Activated naive CD8-positive, alpha-beta T cell treated with anti-CD3 and anti-CD28 coated beads, Interleukin-2, amount 10 ng/mL, durations not matched to agents 7 days and 5 days (primary cell): ENCODE measurements at regions of chr1 and their contacts with region 1.

Region 1: DNA sequence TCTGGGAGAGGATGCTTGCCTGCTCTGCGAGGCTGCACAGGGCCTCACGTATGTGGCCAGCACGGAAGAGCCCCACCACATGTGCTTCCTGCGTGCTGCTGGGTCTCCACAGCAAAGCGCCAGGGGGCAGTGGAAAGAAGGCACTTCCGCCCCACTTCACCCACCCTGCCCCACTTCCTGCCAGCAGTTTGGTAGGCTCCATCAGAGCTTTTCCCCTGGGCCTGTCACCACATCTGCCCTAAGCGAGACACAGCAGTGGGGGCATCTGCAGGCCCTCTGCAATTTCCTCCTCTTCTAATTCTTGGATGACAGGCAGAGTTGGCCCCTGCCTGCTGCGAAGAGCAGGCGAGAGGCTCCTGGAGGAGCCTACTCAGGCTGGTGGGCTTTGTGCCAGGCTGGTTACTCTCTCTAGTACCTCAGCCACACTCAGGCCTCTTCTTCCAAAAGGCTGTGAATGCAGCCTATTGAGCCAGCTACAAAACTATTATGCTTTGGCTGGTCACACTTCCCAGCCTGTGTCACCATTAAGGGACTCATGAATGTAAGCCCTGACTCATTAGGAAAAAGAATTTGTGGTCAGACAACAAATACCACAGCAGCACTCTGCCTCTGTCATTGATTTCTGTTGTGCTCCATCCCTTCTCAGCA is 25.0 kb downstream of the CD244 start:
- DNase-seq: peak; percentile 84
- ATAC-seq: peak; percentile 92
- H3K4me3 Mint-ChIP-seq: peak overlapping the region; percentile 76
- H3K27ac Mint-ChIP-seq: peak overlapping the region; percentile 98
- H3K4me1 Mint-ChIP-seq: peaks cover 63% of the 10 kb centered on the region
- H3K27me3 Mint-ChIP-seq: no peaks in the 10 kb centered on the region

Region 2: GRCh38 chr1:160795951-160796383 is 41.7 kb before region 1 on chr1 and contains the start of gene LY9:
- POLR2A ChIA-PET with region 1: interaction called, 14 read pairs
- DNase-seq: peak; percentile 65
- ATAC-seq: peak; percentile 81
- H3K4me3 Mint-ChIP-seq: peak within 1 kb of the TSS; percentile 92
- H3K27ac Mint-ChIP-seq: peak within 1 kb of the TSS; percentile 97
- H3K4me1 Mint-ChIP-seq: peaks cover 59% of the 10 kb centered on the region
- H3K27me3 Mint-ChIP-seq: no peaks in the 10 kb centered on the region
- total RNA-seq, gene LY9: 70.9 to 73.6 TPM

Region 3: GRCh38 chr1:160855181-160855981 is 17.7 kb after region 1 on chr1:
- POLR2A ChIA-PET with region 1: interaction called, 19 read pairs
- DNase-seq: peak; percentile 53
- ATAC-seq: peak; percentile 89
- H3K4me3 Mint-ChIP-seq: no peak overlapping the region
- H3K27ac Mint-ChIP-seq: no peak overlapping the region
- H3K4me1 Mint-ChIP-seq: peaks cover 13% of the 10 kb centered on the region
- H3K27me3 Mint-ChIP-seq: no peaks in the 10 kb centered on the region

Region 4: DNA sequence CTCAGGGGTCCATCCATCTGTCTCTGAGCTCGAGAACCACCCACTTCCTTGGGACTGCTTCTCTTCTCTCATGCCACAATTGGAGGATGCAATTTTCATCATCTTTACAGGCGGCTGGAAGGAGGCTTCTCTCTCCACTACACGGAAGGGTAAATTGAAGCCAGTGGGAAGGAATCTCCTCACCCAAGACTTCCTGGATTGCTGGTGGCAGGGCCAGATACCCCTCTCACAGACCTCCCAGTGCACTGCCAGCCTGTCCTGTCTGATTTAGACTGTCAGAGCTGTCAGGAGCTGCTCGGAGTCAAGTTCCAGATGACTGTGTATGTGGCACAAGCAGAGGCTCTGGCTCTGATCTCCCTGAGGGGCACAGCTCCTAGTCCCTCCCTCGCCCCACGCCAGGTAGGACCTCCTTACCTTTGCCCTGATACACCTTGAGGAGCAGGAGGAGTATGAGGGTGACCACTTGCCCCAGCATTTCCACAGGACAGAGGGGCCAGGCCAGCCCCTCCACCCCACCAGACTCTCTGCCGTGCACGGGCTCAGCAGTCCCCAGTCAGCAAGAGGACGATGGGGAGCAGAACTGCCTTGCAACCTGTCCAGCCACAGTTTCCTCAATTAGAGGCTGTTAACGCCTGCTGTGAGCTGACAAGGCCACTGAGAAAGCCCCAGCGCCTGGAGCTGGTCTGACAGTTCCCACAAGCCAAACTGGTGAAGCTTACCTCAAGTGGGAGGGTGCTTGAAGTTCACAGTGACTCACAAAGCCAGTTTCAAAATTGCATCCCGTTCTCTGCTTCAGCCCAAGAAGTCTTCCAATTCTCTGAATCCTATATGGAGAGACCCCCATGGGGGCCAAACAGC is 24.8 kb after region 1 on chr1 and contains the start of gene CD244:
- POLR2A ChIA-PET with region 1: interaction called, 25 read pairs
- DNase-seq: peak; percentile 61
- ATAC-seq: peak; percentile 95
- H3K4me3 Mint-ChIP-seq: peak within 1 kb of the TSS; percentile 67
- H3K27ac Mint-ChIP-seq: peak within 1 kb of the TSS; percentile 80
- H3K4me1 Mint-ChIP-seq: peaks cover 40% of the 10 kb centered on the region
- H3K27me3 Mint-ChIP-seq: no peaks in the 10 kb centered on the region
- total RNA-seq, gene CD244: 6.0 to 7.8 TPM

Region 5: DNA sequence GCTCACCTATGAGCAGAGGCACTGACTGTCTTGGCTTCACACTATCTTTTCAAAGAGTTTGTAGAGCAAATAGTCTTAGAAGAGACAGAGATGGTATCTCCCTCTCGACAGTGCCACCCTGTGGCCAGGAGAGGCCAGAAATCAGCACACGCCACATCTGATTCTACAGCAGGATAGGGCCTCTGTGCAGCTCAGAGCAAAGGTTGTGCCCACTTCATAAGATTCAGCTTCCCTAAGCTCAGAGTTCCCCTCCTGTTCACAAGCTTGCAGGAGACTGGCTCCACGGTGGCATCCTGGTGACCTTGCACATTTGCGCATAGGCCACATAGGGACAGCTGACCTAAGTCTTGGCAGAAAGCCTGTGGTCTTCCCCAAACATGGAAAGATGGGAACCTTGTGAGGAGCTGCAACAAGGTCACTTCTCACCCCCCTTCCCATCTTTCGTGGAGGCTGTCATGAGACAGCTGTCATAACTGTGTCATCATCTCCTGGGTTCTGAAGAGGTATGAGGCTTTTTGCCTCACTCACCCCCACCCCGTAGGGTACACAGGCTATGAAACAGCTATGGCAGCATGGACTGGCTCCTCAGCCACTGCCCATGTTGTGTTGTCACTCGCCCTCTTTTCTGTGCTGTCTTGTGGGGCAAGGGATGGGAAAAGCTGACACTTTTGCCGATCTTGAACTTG is 113.9 kb after region 1 on chr1:
- POLR2A ChIA-PET with region 1: interaction called, 17 read pairs
- DNase-seq: peak; percentile 80
- ATAC-seq: peak; percentile 88
- H3K4me3 Mint-ChIP-seq: no peak overlapping the region
- H3K27ac Mint-ChIP-seq: no peak overlapping the region
- H3K4me1 Mint-ChIP-seq: peaks cover 16% of the 10 kb centered on the region
- H3K27me3 Mint-ChIP-seq: no peaks in the 10 kb centered on the region